Prostate gland (tissue), 2 donors: ENCODE measurements at regions of chr6 and their contacts with region 1.

Region 1: DNA sequence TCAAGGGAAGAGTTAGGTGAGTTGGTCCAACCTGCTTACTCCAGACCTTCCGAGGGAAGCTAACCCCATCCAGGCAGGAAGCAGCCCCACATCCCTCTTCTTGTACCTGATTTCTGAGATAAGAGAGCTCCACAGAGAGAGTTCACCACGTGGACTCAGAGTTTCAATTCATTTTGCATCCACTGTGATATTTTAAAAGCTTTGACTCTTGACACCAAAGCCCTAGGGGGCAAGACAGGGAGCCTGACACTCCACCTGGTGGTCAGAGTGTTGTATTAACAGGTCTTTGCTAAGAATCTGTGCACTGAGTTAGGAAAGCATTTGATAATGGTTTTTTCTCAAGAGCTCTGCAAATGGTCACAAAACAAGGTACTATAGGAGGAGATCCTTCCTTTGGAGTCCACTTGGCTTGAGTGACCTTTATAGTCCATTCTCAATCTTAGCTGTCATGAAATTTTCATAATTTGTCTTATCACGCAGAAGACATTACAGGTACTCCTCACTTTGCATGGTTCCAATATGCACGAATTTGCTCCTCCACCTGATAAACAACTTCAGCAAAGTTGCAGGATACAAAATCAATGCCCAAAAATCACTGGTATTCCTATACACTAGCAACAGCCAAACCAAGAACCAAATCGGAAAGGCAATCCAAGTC is 56.2 kb upstream of the RIPOR2 start:
- DNase-seq: peak; percentile 28
- H3K4me3 ChIP-seq: no peak overlapping the region
- H3K27ac ChIP-seq: no peak overlapping the region
- H3K4me1 ChIP-seq: no peaks in the 10 kb centered on the region
- H3K27me3 ChIP-seq: no peaks in the 10 kb centered on the region
- CTCF ChIP-seq: peak; percentile 56 to 76 (median 74)
- POLR2A ChIP-seq: no peak

Region 2: DNA sequence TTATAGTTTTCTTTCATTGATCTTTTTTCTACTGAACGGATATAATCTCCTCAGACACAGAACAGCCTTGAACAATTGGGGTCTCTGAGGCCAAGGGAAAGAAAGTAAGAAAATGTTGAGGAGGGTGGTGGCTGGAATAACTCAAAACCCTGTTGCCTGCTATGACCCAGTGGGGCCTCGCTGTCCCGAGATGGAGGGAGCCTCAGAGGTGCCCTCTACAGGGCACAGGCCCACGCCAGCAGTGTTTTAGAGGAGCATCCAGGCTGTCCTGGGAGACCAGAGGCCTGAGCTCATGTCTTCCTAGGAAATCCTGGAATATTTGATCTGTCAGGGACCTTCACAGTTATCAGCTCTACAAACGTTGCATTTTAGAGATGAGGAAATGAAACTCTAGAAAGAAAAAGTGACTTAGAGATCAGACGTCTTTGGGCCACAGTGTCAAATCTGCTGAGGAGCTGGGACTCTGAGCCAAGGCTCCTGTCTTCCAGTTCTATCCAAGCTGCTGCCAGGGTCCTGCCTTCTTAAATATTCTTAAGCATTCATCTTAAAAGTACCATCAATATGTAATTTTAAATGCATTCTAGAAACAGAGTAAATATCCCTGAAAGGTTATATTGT is 470.9 kb before region 1 on chr6:
- intact Hi-C with region 1: no loop called
- DNase-seq: peak; percentile 26
- H3K4me3 ChIP-seq: no peak overlapping the region
- H3K27ac ChIP-seq: no peak overlapping the region
- H3K4me1 ChIP-seq: no peaks in the 10 kb centered on the region
- H3K27me3 ChIP-seq: no peaks in the 10 kb centered on the region
- CTCF ChIP-seq: peak in 3 of 4 experiments; percentile 11 to 51 (median 30)
- POLR2A ChIP-seq: no peak

Region 3: GRCh38 chr6:24855395-24856245 is 136.3 kb before region 1 on chr6:
- intact Hi-C with region 1: loop called (anchors 2 kb)
- DNase-seq: peak; percentile 62
- H3K4me3 ChIP-seq: no peak overlapping the region
- H3K27ac ChIP-seq: no peak overlapping the region
- H3K4me1 ChIP-seq: peaks cover 6% of the 10 kb centered on the region
- H3K27me3 ChIP-seq: no peaks in the 10 kb centered on the region
- CTCF ChIP-seq: peak; percentile 82 to 90 (median 85)
- POLR2A ChIP-seq: no peak

Region 4: GRCh38 chr6:25070547-25071366 is 78.8 kb after region 1 on chr6:
- intact Hi-C with region 1: loop called (anchors 5 kb)
- DNase-seq: peak; percentile 83
- H3K4me3 ChIP-seq: no peak overlapping the region
- H3K27ac ChIP-seq: no peak overlapping the region
- H3K4me1 ChIP-seq: no peaks in the 10 kb centered on the region
- H3K27me3 ChIP-seq: no peaks in the 10 kb centered on the region
- CTCF ChIP-seq: peak; percentile 72 to 92 (median 87)
- POLR2A ChIP-seq: no peak

Region 5: GRCh38 chr6:25278261-25278913 is 286.4 kb after region 1 on chr6:
- intact Hi-C with region 1: no loop called
- DNase-seq: no peak
- H3K4me3 ChIP-seq: peak overlapping the region; percentile 71 to 78
- H3K27ac ChIP-seq: peak overlapping the region; percentile 79 to 85
- H3K4me1 ChIP-seq: peaks cover 6% of the 10 kb centered on the region
- H3K27me3 ChIP-seq: no peaks in the 10 kb centered on the region
- CTCF ChIP-seq: no peak
- POLR2A ChIP-seq: no peak